Left ventricle myocardium inferior (tissue), 1 donor: ENCODE measurements at regions of chrX and their contacts with region 1.

Region 1: DNA sequence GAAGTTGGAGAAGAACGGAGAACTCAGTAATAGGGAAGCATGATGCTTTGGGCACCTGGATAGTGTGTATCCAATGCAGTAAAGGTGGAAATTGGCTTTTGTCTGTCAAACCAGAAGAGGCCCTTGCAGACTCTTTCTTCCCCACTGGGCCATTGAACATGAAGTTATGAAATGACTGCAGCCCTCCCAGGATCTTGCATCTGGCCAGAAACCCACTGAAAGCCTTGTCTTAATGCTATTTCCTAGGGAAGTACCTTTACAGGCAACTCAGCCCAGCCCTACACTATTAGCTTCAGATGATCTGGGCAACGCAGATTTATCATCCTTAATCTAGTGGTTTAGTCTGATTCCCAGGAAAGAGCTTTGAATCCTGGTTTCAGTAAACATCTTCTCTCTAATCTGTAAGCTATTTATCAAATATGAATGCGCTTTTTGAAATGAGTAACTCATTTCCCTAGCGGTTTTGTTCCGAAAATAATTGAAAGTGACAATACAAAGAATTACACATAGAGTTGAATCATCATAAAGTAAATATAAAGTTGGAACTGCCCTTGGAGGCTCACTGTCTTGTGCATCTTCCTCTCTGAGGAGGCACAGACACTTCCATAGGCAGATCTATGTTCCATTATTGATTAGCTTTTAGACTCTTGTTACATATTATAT is 464.1 kb downstream of the IDS start:
- DNase-seq: no peak
- H3K4me3 ChIP-seq: no peak overlapping the region
- H3K27ac ChIP-seq: no peak overlapping the region
- H3K4me1 ChIP-seq: no peaks in the 10 kb centered on the region
- H3K27me3 ChIP-seq: no peaks in the 10 kb centered on the region
- CTCF ChIP-seq: no peak

Region 2: GRCh38 chrX:149003863-149004660 is 36.9 kb before region 1 on chrX:
- intact Hi-C with region 1: no loop called
- DNase-seq: no peak
- H3K4me3 ChIP-seq: no peak overlapping the region
- H3K27ac ChIP-seq: no peak overlapping the region
- H3K4me1 ChIP-seq: no peaks in the 10 kb centered on the region
- H3K27me3 ChIP-seq: no peaks in the 10 kb centered on the region
- CTCF ChIP-seq: no peak

Region 3: GRCh38 chrX:149114001-149114400 is 73.0 kb after region 1 on chrX:
- intact Hi-C with region 1: loop called (anchors 10 kb)
- DNase-seq: no peak
- H3K4me3 ChIP-seq: no peak overlapping the region
- H3K27ac ChIP-seq: no peak overlapping the region
- H3K4me1 ChIP-seq: no peaks in the 10 kb centered on the region
- H3K27me3 ChIP-seq: no peaks in the 10 kb centered on the region
- CTCF ChIP-seq: no peak